ENCODE measurements at regions of chr3 and their contacts with region 1.

Region 1: GRCh38 chr3:46089237-46090011 is 62.1 kb upstream of the XCR1 start:
- DNase-seq: peak; percentile 65
- H3K4me3 ChIP-seq: no peak overlapping the region
- H3K27ac ChIP-seq: no peak overlapping the region
- H3K27me3 ChIP-seq: no peaks in the 10 kb centered on the region
- CTCF ChIP-seq: no peak

Region 2: DNA sequence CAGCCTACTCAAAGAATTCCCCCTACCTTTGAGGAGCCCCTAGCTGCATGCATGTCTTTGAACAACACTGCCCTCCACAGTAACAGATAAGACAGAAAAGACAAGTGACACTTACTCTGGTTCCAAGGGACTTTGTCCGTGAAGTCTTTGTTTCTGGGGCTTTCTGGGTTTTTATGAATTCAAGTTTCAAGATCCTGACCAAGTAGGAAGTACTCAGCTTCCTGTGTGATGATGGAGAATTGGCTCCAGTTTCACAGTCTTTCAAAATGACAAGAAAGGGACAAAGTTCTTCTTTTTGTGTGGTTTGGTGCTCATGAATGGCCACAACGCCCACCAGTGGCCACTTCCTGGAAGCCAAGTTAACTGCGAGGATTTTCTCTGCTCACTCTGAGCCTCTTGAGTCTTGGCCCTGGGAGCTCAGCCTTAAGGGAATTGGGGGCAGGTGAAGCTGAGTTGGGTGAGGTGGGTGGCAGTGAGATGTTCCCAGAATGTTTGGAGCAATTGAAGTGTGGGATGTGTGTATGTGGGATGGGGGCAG is 118.8 kb after region 1 on chr3 and contains the start of gene CCR1:
- CTCF ChIA-PET with region 1: interaction called, 14 read pairs
- POLR2A ChIA-PET with region 1: no interaction called
- DNase-seq: no peak
- H3K4me3 ChIP-seq: no peak within 1 kb of the TSS
- H3K27ac ChIP-seq: no peak within 1 kb of the TSS
- H3K27me3 ChIP-seq: peaks cover 8% of the 10 kb centered on the region
- CTCF ChIP-seq: peak; percentile 56
- polyA plus RNA-seq, gene CCR1: 0.02 TPM in 1 of 2 replicates, not detected in the other

Region 3: GRCh38 chr3:46368569-46368968 is 279.1 kb after region 1 on chr3:
- CTCF ChIA-PET with region 1: interaction called, 20 read pairs
- POLR2A ChIA-PET with region 1: no interaction called
- DNase-seq: no peak
- H3K4me3 ChIP-seq: no peak overlapping the region
- H3K27ac ChIP-seq: no peak overlapping the region
- H3K27me3 ChIP-seq: peaks cover 13% of the 10 kb centered on the region
- CTCF ChIP-seq: no peak

Region 4: DNA sequence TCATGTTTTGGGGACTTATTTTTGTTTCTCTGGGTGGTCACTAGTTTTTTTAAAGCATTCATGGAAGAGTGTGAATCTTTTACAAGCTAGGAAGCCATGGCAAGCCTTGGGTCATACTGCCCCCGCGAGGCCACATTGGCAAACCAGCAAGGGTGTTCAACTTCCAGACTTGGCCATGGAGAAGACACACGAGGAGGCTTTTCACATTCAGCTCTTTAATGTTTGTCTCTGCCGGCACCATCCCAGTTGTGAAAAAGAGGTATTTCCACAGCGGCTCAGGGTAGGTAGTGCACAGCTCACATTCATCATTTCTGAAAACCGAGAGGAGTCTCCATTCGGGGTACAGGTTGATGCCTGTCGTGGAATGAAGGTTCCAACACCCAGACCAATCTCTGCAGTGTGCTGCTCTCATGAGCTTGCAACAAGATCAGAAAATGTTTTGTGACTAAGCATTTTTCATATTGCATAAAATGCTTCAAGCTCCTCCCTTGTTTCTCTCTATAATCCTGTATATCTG is 289.1 kb after region 1 on chr3:
- CTCF ChIA-PET with region 1: interaction called, 15 read pairs
- POLR2A ChIA-PET with region 1: no interaction called
- DNase-seq: peak; percentile 13
- H3K4me3 ChIP-seq: no peak overlapping the region
- H3K27ac ChIP-seq: no peak overlapping the region
- H3K27me3 ChIP-seq: peaks cover 13% of the 10 kb centered on the region
- CTCF ChIP-seq: peak; percentile 71

Measured in AG04450 (cell line).